BJ (cell line): ENCODE measurements at regions of chr12 and their contacts with region 1.

Region 1: GRCh38 chr12:123533672-123534643 is at the start of gene RILPL1:
- DNase-seq: no peak
- H3K4me3 ChIP-seq: peak within 1 kb of the TSS; percentile 92
- H3K27me3 ChIP-seq: no peaks in the 10 kb centered on the region
- CTCF ChIP-seq: peak; percentile 37; the same call in 1 of the 2 replicates
- polyA plus RNA-seq, gene RILPL1: 19.1 and 22.3 TPM in 2 replicates

Region 2: GRCh38 chr12:123034865-123035264 is 499.1 kb before region 1 on chr12:
- CTCF ChIA-PET with region 1: no interaction called
- POLR2A ChIA-PET with region 1: no interaction called
- DNase-seq: no peak
- H3K4me3 ChIP-seq: no peak overlapping the region
- H3K27me3 ChIP-seq: no peaks in the 10 kb centered on the region; the same call in 1 of the 2 replicates
- CTCF ChIP-seq: no peak

Region 3: GRCh38 chr12:123580772-123581171 is 46.8 kb after region 1 on chr12:
- CTCF ChIA-PET with region 1: interaction called, 5 read pairs
- POLR2A ChIA-PET with region 1: interaction called, 11 read pairs
- DNase-seq: no peak
- H3K4me3 ChIP-seq: no peak overlapping the region
- H3K27me3 ChIP-seq: no peaks in the 10 kb centered on the region
- CTCF ChIP-seq: no peak